ENCODE measurements at regions of chr20 and their contacts with region 1.

Region 1: DNA sequence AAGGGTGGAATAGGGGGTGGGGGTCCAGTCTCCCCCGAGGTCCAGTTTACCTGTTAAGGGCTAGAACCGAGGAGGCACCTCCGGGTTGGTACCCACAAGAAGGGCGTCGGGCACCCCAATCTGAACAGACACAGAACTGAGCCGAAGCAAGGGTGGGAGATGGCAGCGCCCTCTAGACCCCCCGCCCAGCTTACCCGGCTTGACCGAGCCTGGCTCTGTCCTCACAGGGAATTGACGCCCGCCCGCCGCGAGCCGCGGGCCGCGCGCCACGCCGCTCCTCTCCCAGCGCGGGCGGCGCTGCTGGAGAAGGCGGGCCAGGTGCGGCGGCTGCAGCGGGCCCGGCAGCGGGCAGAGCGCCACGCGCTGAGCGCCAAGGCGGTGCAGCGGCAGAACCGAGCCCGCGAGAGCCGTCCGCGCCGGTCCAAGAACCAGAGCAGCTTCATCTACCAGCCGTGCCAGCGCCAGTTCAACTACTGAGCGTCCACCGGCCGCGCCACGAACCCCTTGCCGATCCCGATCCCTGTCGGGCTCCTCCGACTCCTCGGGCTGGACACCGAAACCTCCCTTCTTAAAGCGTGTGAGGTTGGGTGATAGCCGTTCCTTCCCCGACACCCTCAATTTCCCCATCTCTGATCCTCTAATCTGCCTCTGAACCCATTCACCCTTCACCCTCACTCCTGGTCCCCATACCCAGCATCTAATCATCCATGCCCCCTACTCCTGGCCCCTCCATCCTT is 5.9 kb downstream of the TP53INP2 start:
- DNase-seq: no peak
- ATAC-seq: peak; percentile 51
- H3K4me3 ChIP-seq: peak overlapping the region; percentile 91
- H3K27ac ChIP-seq: peak overlapping the region; percentile 86
- H3K4me1 ChIP-seq: peaks cover 23% of the 10 kb centered on the region
- H3K27me3 ChIP-seq: no peaks in the 10 kb centered on the region
- CTCF ChIP-seq: peak; percentile 31 to 47 (median 41); a peak in 5 of 6 replicates
- EP300 ChIP-seq: no peak
- POLR2A ChIP-seq: no peak
- RAD21 ChIP-seq: no peak

Region 2: DNA sequence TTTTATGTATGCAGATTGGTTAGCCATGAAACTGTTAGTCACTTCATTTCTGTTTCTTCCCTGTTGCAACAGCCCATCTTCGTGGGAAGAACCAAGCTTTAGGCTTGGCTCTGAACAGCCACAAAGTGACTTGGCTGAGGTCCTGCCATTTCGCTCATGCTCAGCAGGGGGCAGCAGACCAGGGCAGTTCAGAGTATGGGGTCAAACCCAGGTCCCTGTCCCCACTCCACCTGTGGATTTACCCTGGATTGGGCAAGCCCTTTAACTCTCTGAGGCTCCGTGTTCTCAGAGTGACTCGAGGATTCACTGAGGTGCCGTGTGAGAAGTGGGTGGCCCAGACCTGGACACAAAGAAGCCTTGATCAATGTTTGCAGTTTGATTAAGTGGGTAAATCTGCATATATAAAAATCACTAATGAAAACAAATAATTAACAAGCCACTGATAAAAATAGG is 171.3 kb before region 1 on chr20:
- CTCF ChIA-PET with region 1: interaction called, 68 read pairs
- POLR2A ChIA-PET with region 1: no interaction called
- RAD21 ChIA-PET with region 1: interaction called, 9 read pairs
- SMC1A ChIA-PET with region 1: interaction called, 50 read pairs
- in situ Hi-C with region 1: no loop called
- intact Hi-C with region 1: loop called (anchors 1 kb)
- DNase-seq: no peak
- ATAC-seq: peak; percentile 85
- H3K4me3 ChIP-seq: no peak overlapping the region
- H3K27ac ChIP-seq: no peak overlapping the region
- H3K4me1 ChIP-seq: peaks cover 4% of the 10 kb centered on the region; the same call in 1 of the 2 replicates
- H3K27me3 ChIP-seq: no peaks in the 10 kb centered on the region
- CTCF ChIP-seq: peak; percentile 78 to 92 (median 88)
- EP300 ChIP-seq: no peak
- POLR2A ChIP-seq: no peak
- RAD21 ChIP-seq: peak; percentile 69

Region 3: GRCh38 chr20:34558320-34559218 is 151.4 kb before region 1 on chr20 and contains the start of gene MAP1LC3A:
- CTCF ChIA-PET with region 1: interaction called, 17 read pairs
- POLR2A ChIA-PET with region 1: interaction called, 4 read pairs
- RAD21 ChIA-PET with region 1: interaction called, 5 read pairs
- SMC1A ChIA-PET with region 1: interaction called, 16 read pairs
- in situ Hi-C with region 1: no loop called
- intact Hi-C with region 1: no loop called
- DNase-seq: no peak
- ATAC-seq: peak; percentile 85
- H3K4me3 ChIP-seq: peak within 1 kb of the TSS; percentile 61
- H3K27ac ChIP-seq: 0 out of 2 replicates have a peak within 1 kb of the TSS, but pooled peaks have one; percentile 22
- H3K4me1 ChIP-seq: no peaks in the 10 kb centered on the region
- H3K27me3 ChIP-seq: no peaks in the 10 kb centered on the region
- CTCF ChIP-seq: no peak
- EP300 ChIP-seq: no peak
- POLR2A ChIP-seq: peak; percentile 57
- RAD21 ChIP-seq: no peak
- polyA plus RNA-seq, gene MAP1LC3A: not detected

Region 4: DNA sequence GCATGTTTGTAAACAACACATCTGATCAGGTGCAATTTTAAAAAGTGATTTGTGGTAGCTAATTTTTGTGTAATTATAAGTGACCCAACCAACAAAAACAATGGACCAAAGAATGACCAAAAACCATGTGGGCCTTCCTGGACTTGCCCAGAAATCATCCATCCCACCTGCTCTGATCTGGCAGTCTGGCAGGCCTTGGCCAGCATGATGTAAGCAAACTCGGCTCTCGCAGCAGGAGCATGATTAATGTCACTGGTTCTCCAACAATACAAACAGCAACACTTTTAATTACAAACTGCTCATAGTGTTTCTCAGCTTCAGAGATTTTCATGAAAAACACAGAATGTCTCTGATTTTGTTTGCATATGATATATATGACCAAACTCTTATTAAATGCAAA is 10.3 kb after region 1 on chr20:
- CTCF ChIA-PET with region 1: interaction called, 31 read pairs
- POLR2A ChIA-PET with region 1: interaction called, 18 read pairs
- RAD21 ChIA-PET with region 1: interaction called, 25 read pairs
- SMC1A ChIA-PET with region 1: interaction called, 24 read pairs
- in situ Hi-C with region 1: no loop called
- intact Hi-C with region 1: no loop called
- DNase-seq: no peak
- ATAC-seq: peak; percentile 49
- H3K4me3 ChIP-seq: no peak overlapping the region; the same call in 1 of the 2 replicates
- H3K27ac ChIP-seq: peak overlapping the region; percentile 79
- H3K4me1 ChIP-seq: peaks cover 37% of the 10 kb centered on the region
- H3K27me3 ChIP-seq: no peaks in the 10 kb centered on the region
- CTCF ChIP-seq: no peak
- EP300 ChIP-seq: no peak
- POLR2A ChIP-seq: no peak
- RAD21 ChIP-seq: no peak

Region 5: GRCh38 chr20:34753706-34754461 is 43.9 kb after region 1 on chr20:
- CTCF ChIA-PET with region 1: interaction called, 9 read pairs
- POLR2A ChIA-PET with region 1: interaction called, 5 read pairs
- RAD21 ChIA-PET with region 1: interaction called, 5 read pairs
- SMC1A ChIA-PET with region 1: interaction called, 10 read pairs
- in situ Hi-C with region 1: no loop called
- intact Hi-C with region 1: loop called (anchors 2 kb)
- DNase-seq: no peak
- ATAC-seq: no peak
- H3K4me3 ChIP-seq: no peak overlapping the region
- H3K27ac ChIP-seq: peak overlapping the region; percentile 73
- H3K4me1 ChIP-seq: peaks cover 24% of the 10 kb centered on the region
- H3K27me3 ChIP-seq: no peaks in the 10 kb centered on the region
- CTCF ChIP-seq: peak; percentile 18 to 28 (median 20); a peak in 3 of 6 replicates
- EP300 ChIP-seq: no peak
- POLR2A ChIP-seq: no peak
- RAD21 ChIP-seq: peak; percentile 50

Region 6: GRCh38 chr20:35363190-35363589 is 653.2 kb after region 1 on chr20:
- CTCF ChIA-PET with region 1: no interaction called
- POLR2A ChIA-PET with region 1: no interaction called
- RAD21 ChIA-PET with region 1: no interaction called
- SMC1A ChIA-PET with region 1: no interaction called
- in situ Hi-C with region 1: no loop called
- intact Hi-C with region 1: no loop called
- DNase-seq: no peak
- ATAC-seq: no peak
- H3K4me3 ChIP-seq: no peak overlapping the region
- H3K27ac ChIP-seq: no peak overlapping the region
- H3K4me1 ChIP-seq: no peaks in the 10 kb centered on the region
- H3K27me3 ChIP-seq: no peaks in the 10 kb centered on the region
- CTCF ChIP-seq: no peak
- EP300 ChIP-seq: no peak
- POLR2A ChIP-seq: no peak
- RAD21 ChIP-seq: no peak

Measured in GM12878 (cell line).